ENCODE measurements at regions of chr3 and their contacts with region 1.

Region 1: GRCh38 chr3:184561061-184561912 is at the start of gene EPHB3:
- DNase-seq: peak; percentile 81 to 90 (median 89)
- ATAC-seq: peak; percentile 92
- H3K4me3 ChIP-seq: peak within 1 kb of the TSS; percentile 55
- H3K4me3 Mint-ChIP-seq: peak within 1 kb of the TSS; percentile 66 to 87 (median 81)
- H3K27ac ChIP-seq: no peak within 1 kb of the TSS
- H3K27ac Mint-ChIP-seq: peak within 1 kb of the TSS in 8 of 9 donors; percentile 59 to 84 (median 68)
- H3K4me1 ChIP-seq: peaks cover 14 to 44% of the 10 kb centered on the region in 2 donors
- H3K4me1 Mint-ChIP-seq: peaks cover 18 to 56% (median 41%) of the 10 kb centered on the region in 7 donors
- H3K27me3 ChIP-seq: peaks cover 0 to 9% of the 10 kb centered on the region in 2 donors
- H3K27me3 Mint-ChIP-seq: peaks cover 16 to 73% (median 35%) of the 10 kb centered on the region in 5 donors
- total RNA-seq, gene EPHB3: 0.07 to 0.49 (median 0.32) TPM

Region 2: DNA sequence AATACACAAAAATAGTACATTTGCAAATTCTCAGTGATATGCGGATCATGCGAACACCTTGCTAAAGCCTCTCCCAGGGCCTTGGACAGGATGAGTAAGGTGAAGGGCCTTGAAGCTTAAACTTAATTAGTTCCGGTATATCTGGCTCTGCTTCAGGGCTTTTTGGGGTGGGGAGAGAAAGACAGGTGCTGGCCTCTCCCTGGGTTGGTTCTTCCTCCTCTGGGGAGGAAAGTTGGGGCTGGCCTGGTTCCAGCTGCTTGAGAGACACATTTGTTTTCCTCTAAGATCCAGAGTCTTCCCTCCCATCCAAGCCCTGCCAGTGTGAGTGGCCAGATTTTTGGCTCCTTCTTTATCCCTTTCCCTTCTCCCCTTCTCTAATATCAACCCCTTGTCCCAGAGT is 64.3 kb before region 1 on chr3:
- CTCF ChIA-PET with region 1: no interaction called
- POLR2A ChIA-PET with region 1: no interaction called
- intact Hi-C with region 1: no loop called
- DNase-seq: no peak
- ATAC-seq: no peak
- H3K4me3 ChIP-seq: no peak overlapping the region
- H3K4me3 Mint-ChIP-seq: no peak overlapping the region
- H3K27ac ChIP-seq: no peak overlapping the region
- H3K27ac Mint-ChIP-seq: no peak overlapping the region
- H3K4me1 ChIP-seq: no peaks in the 10 kb centered on the region
- H3K4me1 Mint-ChIP-seq: peaks cover 5 to 21% (median 6%) of the 10 kb centered on the region in 7 donors
- H3K27me3 ChIP-seq: peaks cover 0 to 5% of the 10 kb centered on the region in 2 donors
- H3K27me3 Mint-ChIP-seq: peaks cover 39 to 62% (median 56%) of the 10 kb centered on the region in 5 donors

Region 3: GRCh38 chr3:184583578-184584425 is 22.5 kb after region 1 on chr3:
- CTCF ChIA-PET with region 1: interaction called, 6 read pairs
- POLR2A ChIA-PET with region 1: interaction called, 5 read pairs
- intact Hi-C with region 1: loop called in 1 of 2 experiments (anchors 1 kb)
- DNase-seq: no peak
- ATAC-seq: peak; percentile 45
- H3K4me3 ChIP-seq: no peak overlapping the region
- H3K4me3 Mint-ChIP-seq: peak overlapping the region in 7 of 10 donors; percentile 38 to 84 (median 54)
- H3K27ac ChIP-seq: no peak overlapping the region
- H3K27ac Mint-ChIP-seq: no peak overlapping the region
- H3K4me1 ChIP-seq: peaks cover 0 to 5% of the 10 kb centered on the region in 2 donors
- H3K4me1 Mint-ChIP-seq: peaks cover 0 to 12% (median 9%) of the 10 kb centered on the region in 7 donors
- H3K27me3 ChIP-seq: peaks cover 0 to 4% of the 10 kb centered on the region in 2 donors
- H3K27me3 Mint-ChIP-seq: peaks cover 10 to 37% (median 22%) of the 10 kb centered on the region in 5 donors

Region 4: GRCh38 chr3:184711493-184712247 is 150.4 kb after region 1 on chr3 and contains the start of gene MAGEF1:
- CTCF ChIA-PET with region 1: no interaction called
- POLR2A ChIA-PET with region 1: interaction called, 5 read pairs
- intact Hi-C with region 1: loop called (anchors 1 kb)
- DNase-seq: peak; percentile 34 to 78 (median 69)
- ATAC-seq: peak; percentile 87
- H3K4me3 ChIP-seq: peak within 1 kb of the TSS; percentile 70
- H3K4me3 Mint-ChIP-seq: peak within 1 kb of the TSS; percentile 81 to 99 (median 93)
- H3K27ac ChIP-seq: peak within 1 kb of the TSS; percentile 77
- H3K27ac Mint-ChIP-seq: peak within 1 kb of the TSS; percentile 69 to 99 (median 87)
- H3K4me1 ChIP-seq: peaks cover 10 to 17% of the 10 kb centered on the region in 2 donors
- H3K4me1 Mint-ChIP-seq: peaks cover 28 to 44% (median 34%) of the 10 kb centered on the region in 7 donors
- H3K27me3 ChIP-seq: no peaks in the 10 kb centered on the region
- H3K27me3 Mint-ChIP-seq: peaks cover 0 to 20% (median 0%) of the 10 kb centered on the region in 5 donors
- total RNA-seq, gene MAGEF1: 9.0 to 17.4 (median 13.3) TPM

Region 5: DNA sequence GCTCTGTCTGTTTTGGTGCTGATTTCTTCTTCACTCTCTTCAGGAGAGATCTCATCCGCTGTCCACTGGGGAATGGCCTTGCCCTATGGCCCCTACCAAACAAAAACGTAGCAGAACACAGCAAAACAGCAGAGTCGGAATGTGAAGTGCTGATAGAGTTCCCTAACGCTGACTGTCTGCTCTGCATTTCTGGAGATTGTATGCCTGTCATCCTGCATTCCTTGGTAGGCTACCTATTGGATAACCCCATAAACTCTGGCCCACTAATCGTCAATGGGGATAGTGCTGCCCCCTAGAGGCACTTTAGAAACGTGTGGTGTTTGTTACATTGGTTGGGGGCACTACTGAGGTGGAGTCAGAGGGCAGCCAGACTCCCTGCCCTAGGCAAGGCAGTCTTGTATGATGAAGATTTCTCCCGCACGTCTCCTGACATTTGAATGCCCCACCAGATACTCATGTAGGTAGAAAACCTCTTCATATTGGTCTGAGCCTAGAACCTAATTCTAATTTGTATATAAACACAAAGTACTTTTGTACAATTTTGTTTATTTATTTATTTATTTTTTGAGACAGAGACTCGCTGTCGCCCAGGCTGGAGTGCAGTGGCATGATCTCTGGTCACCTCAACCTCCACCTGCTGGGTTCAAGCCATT is 166.2 kb after region 1 on chr3:
- CTCF ChIA-PET with region 1: interaction called, 24 read pairs
- POLR2A ChIA-PET with region 1: interaction called, 4 read pairs
- intact Hi-C with region 1: loop called (anchors 1 kb)
- DNase-seq: peak in 8 of 9 donors; percentile 12 to 45 (median 34)
- ATAC-seq: peak; percentile 85
- H3K4me3 ChIP-seq: no peak overlapping the region
- H3K4me3 Mint-ChIP-seq: no peak overlapping the region
- H3K27ac ChIP-seq: no peak overlapping the region
- H3K27ac Mint-ChIP-seq: peak overlapping the region in 2 of 9 donors; percentile 37 to 44
- H3K4me1 ChIP-seq: no peaks in the 10 kb centered on the region
- H3K4me1 Mint-ChIP-seq: peaks cover 0 to 4% (median 0%) of the 10 kb centered on the region in 7 donors
- H3K27me3 ChIP-seq: no peaks in the 10 kb centered on the region
- H3K27me3 Mint-ChIP-seq: peaks cover 0 to 39% (median 6%) of the 10 kb centered on the region in 5 donors

Region 6: DNA sequence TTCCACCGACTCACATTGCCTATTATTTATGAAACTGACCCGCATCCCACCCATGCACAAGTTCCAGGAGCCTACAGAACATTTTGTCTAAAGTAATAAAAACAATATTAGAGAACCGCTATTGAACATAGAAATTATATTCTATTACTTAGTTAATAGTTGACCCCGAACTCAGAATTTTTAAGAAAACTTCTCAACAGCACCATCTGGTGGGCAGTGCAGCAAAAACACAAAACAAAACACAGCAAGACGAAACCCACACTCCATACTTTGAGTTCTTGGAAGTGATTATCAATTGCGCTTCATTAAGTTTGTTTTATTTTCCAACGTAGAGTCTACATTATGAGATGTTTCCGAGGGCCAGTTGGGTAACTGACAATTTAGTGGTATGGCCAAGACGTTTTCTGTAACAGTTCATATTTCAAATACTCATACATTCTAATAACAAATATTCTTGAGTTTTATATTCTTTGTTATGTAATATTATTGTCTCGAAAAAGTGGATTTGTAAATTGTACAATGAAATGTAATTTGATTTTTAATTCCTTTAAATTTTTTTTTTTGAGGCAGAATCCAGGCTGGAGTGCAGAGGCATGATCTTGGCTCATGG is 615.6 kb after region 1 on chr3:
- CTCF ChIA-PET with region 1: interaction called, 4 read pairs
- POLR2A ChIA-PET with region 1: no interaction called
- intact Hi-C with region 1: loop called in 1 of 2 experiments (anchors 1 kb)
- DNase-seq: peak in 2 of 9 donors; percentile 14 to 15
- ATAC-seq: no peak
- H3K4me3 ChIP-seq: no peak overlapping the region
- H3K4me3 Mint-ChIP-seq: no peak overlapping the region
- H3K27ac ChIP-seq: no peak overlapping the region
- H3K27ac Mint-ChIP-seq: no peak overlapping the region
- H3K4me1 ChIP-seq: no peaks in the 10 kb centered on the region
- H3K4me1 Mint-ChIP-seq: peaks cover 0 to 4% (median 0%) of the 10 kb centered on the region in 7 donors
- H3K27me3 ChIP-seq: no peaks in the 10 kb centered on the region
- H3K27me3 Mint-ChIP-seq: peaks cover 0 to 6% (median 6%) of the 10 kb centered on the region in 5 donors